ENCODE measurements at regions of chr3 and their contacts with region 1.

Region 1: DNA sequence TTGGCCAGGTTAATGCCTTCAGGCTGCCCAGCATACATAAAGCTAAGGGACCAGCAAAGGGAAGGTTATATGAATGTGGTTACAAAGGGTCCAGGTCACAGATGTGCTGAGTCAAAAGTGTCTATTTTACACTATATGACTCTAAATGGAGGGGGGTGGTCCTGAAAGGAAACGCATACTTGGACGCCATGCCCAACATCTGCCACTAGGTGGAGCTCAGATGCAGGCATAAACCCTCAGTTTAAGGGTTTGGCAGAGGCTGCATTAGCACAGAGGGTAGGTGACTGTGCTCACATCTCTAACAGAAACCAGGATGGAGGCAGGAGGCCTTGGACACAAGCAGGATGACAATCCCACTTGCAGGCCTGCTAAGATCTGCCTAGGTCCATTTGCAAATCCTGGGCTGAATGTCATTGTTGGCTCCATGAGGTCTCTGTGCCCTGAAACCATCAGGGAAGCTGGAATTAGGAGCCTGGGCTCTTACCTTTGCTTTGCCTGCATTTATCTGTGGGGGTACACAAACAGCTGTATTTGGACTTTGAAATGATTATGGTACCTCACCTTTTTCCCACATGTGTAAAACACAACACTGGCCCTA is 55.8 kb downstream of the ZNF621 start:
- DNase-seq: peak; percentile 39
- H3K4me3 Mint-ChIP-seq: no peak overlapping the region
- H3K27ac Mint-ChIP-seq: no peak overlapping the region
- H3K4me1 Mint-ChIP-seq: no peaks in the 10 kb centered on the region
- H3K27me3 Mint-ChIP-seq: peaks cover 4% of the 10 kb centered on the region

Region 2: DNA sequence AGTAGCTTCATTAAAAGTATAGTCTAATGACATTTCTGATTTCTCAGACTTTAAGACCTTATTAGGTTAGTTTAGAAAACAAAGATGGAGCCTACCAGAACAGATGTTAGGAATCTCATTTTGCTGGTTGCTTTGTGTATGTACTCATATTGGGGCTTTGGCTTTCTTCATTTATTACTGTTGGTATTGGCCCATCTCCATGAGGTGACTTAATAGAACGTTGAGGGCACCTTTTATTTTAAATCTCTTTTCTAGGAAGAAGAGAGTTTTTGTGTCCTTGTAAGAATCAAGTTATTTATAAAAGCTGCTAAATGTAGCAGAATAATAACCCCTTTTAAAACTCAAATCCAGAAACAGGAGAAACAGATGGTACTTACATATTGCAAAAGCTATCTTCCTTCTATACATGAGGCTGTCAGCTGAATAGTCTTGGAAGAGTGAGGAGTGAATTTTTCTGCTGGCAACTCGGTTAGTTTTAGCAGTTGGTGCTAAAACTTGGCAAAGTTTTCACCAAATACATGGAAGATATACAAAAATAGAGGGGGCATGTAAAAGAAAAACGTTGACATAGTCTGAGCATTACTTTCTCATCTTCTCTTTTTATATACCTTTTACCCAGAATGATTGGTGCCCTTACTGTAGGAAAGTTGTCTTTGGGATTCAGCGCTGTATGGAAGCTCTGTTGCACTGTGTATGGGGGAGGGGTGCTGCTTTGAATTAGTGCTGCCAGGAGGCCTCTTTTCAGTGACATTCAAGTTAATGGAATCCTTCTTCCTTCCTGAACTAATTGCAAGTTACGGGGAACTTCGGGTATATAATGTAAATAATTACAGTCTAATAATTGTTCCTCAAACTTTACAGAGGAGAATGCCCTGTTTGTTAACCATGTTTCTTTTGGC is 654.5 kb after region 1 on chr3:
- intact Hi-C with region 1: loop called (anchors 10 kb)
- DNase-seq: no peak
- H3K4me3 Mint-ChIP-seq: no peak overlapping the region
- H3K27ac Mint-ChIP-seq: no peak overlapping the region
- H3K4me1 Mint-ChIP-seq: peaks cover 7% of the 10 kb centered on the region
- H3K27me3 Mint-ChIP-seq: no peaks in the 10 kb centered on the region

Region 3: DNA sequence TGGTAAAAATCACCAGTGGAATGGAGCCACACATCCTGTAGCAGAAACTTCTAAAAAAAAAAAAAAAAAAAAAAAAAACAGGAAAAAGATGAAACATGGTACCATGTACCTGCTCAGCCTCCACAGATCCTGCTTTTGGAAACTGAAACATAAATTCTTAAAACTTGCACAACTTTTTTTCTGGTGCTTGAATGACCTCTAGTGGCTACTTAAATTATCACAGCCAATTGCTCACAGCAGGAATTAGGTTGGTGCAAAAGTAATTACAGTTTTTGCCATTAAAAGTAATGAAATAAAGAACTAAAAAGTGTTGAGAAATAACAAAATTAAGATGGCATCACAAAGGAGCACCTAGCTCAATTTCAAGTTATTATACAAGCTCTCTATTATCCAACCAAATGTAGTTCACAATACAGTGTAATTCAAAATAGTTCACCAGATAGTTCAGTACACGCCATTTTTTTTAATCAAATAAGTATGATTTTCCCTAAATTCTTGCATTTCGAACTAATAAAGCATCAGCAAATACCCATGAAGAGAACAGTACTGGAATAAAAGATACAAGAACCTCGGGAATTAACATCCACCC is 1300.7 kb after region 1 on chr3:
- intact Hi-C with region 1: loop called (anchors 1 kb)
- DNase-seq: no peak
- H3K4me3 Mint-ChIP-seq: no peak overlapping the region
- H3K27ac Mint-ChIP-seq: no peak overlapping the region
- H3K4me1 Mint-ChIP-seq: no peaks in the 10 kb centered on the region
- H3K27me3 Mint-ChIP-seq: peaks cover 1% of the 10 kb centered on the region

Region 4: GRCh38 chr3:42190701-42191462 is 1610.3 kb after region 1 on chr3:
- intact Hi-C with region 1: loop called (anchors 5 kb)
- DNase-seq: peak; percentile 42
- H3K4me3 Mint-ChIP-seq: no peak overlapping the region
- H3K27ac Mint-ChIP-seq: no peak overlapping the region
- H3K4me1 Mint-ChIP-seq: peaks cover 30% of the 10 kb centered on the region
- H3K27me3 Mint-ChIP-seq: no peaks in the 10 kb centered on the region